ENCODE measurements at regions of chr3 and their contacts with region 1.

Region 1: DNA sequence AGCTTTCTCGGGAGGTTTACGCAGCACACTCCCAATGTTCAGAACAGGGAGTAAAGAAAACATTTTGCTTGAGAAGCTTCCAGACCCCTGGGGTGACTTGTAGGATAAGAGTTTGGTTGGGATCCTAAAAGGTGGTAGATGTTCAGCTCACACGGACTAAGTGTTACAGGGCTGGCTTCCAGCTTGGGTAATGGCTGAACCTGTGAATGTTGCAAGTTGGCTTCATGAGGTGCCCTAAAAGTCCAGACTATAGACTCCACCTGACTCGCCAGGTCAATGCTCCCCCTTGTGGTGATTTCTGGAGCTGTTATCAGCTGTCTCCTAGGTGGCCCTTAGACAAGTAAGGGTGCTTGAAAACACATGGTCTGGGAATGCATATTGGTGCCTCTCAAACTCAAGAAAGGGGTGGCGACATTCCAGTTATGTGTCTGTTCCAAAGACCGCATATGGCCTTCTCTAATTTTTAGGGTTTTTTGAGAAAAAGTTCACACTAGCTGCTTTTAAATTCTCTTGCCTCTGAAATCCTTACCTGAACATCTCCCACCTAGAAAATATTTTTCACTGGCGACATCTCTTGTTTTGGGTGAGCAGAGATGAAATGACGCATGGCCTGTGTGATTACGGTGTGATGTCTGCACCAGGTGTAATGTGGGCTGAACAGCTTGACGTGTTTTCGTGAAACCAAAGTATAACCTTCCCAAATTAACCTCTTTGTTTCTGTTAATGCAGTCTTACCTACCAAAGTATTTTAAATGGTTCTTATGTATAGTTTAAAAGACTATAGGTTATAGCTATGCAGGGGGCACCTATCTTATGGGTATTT is 175.7 kb upstream of the KBTBD8 start:
- ATAC-seq: peak in 4 of 8 experiments; percentile 18 to 93 (median 74)
- H3K4me3 ChIP-seq: no peak overlapping the region
- H3K27ac ChIP-seq: no peak overlapping the region
- H3K4me1 ChIP-seq: peaks cover 16 to 26% of the 10 kb centered on the region in 2 donors

Region 2: DNA sequence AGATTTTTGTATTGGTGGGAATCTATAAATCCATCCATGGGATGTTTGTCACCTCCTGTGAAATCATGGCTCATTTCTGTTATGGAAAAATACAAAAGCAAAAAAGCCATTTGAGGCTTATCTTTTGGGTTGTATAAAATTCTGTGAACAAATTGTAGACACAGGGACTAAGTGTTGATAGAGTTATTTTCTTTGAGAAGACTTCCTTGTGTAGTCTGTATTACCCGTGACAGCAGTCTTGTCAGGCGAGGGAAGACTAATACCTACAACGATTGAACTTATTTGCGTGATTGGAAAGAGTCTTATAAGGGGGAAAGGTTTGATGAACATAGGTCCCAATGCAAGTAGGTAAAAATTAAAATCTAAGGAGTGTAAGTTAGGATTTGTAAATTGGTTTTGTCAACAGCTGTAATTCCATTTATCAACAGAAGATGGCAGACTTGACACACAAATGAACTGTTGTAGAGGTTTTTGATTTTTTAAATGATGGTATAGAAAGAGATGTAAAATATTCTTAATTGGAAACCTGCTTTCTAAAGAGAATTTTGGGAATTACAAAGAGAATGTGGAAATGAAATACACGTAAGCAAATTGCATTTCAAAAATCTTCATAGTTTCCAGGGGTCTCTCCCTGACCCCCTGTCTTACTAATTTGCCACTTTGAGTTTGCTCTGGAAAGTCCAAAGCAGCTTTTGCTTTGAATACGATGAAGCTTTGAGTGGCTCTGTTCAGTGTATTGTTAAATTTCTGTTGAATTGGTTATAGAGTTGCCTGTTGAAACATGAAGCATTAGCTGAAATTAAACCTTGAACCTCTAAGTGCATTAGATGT is 568.4 kb before region 1 on chr3:
- in situ Hi-C with region 1: loop called in 2 of 9 experiments (anchors 10 to 25 kb)
- ATAC-seq: peak in 3 of 8 experiments; percentile 31 to 40 (median 31)
- H3K4me3 ChIP-seq: no peak overlapping the region
- H3K27ac ChIP-seq: no peak overlapping the region
- H3K4me1 ChIP-seq: no peaks in the 10 kb centered on the region

Region 3: GRCh38 chr3:66276705-66277274 is 545.6 kb before region 1 on chr3:
- in situ Hi-C with region 1: loop called in 8 of 9 experiments (anchors 5 to 25 kb)
- ATAC-seq: peak in 4 of 8 experiments; percentile 43 to 74 (median 62)
- H3K4me3 ChIP-seq: no peak overlapping the region
- H3K27ac ChIP-seq: no peak overlapping the region
- H3K4me1 ChIP-seq: no peaks in the 10 kb centered on the region

Region 4: DNA sequence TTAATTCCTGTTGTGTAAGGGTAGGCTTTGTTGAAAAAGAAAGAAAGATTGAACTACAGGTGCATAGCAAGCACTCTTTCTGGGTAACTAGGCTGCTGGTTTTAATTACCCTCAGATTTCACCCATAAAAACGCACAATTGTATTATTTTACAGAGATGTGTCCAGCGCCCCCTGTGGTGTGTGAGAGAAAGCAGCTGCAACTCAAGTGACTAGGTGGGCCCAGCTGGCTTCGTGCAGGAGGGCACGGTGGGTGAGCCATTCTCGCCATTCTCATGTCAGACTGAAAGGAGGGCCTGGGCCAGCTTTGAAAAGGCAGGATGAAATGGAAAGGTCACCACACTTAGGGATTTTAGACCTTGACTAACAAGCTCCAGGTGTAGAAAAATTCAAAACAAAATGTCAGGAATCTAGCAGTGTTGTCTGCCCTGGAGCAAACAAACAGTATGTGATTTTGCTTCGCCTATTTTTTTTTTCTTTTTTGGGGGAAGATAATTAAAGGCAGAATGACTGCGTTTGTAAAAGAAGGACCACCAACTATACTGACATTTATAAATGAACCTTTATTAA is 444.1 kb before region 1 on chr3:
- in situ Hi-C with region 1: loop called in 1 of 9 experiments (anchors 25 kb)
- ATAC-seq: peak in 4 of 8 experiments; percentile 16 to 44 (median 36)
- H3K4me3 ChIP-seq: no peak overlapping the region
- H3K27ac ChIP-seq: no peak overlapping the region
- H3K4me1 ChIP-seq: no peaks in the 10 kb centered on the region

Region 5: DNA sequence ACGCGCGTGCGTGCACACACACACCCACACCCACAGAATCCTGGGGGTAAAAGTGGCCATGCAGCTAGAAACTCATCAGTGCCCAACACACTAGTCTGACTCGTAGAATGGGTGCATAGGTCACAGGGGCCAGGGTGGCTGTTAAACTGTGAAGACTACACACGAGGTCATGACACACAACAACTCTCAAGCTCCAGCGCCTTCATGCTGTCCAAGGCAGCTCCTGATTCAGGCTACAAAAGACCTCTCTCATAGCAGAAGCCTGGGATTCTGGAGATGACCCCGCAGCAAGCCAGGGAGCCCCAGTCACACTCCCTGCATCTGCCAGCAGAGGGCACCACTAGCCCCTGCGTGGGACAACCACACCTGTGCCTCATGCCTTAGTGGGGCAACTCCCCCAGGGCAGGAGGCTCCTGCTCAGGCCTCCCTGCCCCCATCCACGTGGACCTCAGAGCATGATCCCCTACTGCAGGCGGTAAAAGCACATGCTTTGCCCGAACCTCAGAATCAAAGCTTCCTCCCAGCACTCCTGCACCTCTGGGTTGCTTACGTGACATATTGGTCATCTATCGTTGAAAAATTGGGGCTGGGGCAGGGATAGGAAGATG is 414.7 kb before region 1 on chr3:
- in situ Hi-C with region 1: loop called in 7 of 9 experiments (anchors 10 to 25 kb)
- ATAC-seq: peak; percentile 1 to 86 (median 72)
- H3K4me3 ChIP-seq: no peak overlapping the region
- H3K27ac ChIP-seq: no peak overlapping the region
- H3K4me1 ChIP-seq: peaks cover 0 to 3% of the 10 kb centered on the region in 2 donors

Region 6: GRCh38 chr3:66500576-66501482 is 321.6 kb before region 1 on chr3 and contains the start of gene LRIG1:
- in situ Hi-C with region 1: loop called in 2 of 9 experiments (anchors 25 kb)
- ATAC-seq: peak; percentile 89 to 97 (median 96)
- H3K4me3 ChIP-seq: peak within 1 kb of the TSS; percentile 51 to 84 (median 69)
- H3K27ac ChIP-seq: peak within 1 kb of the TSS; percentile 81 to 87
- H3K4me1 ChIP-seq: peaks cover 19 to 22% of the 10 kb centered on the region in 2 donors
- total RNA-seq, gene LRIG1: 15.0 to 135 (median 39.6) TPM

Region 7: DNA sequence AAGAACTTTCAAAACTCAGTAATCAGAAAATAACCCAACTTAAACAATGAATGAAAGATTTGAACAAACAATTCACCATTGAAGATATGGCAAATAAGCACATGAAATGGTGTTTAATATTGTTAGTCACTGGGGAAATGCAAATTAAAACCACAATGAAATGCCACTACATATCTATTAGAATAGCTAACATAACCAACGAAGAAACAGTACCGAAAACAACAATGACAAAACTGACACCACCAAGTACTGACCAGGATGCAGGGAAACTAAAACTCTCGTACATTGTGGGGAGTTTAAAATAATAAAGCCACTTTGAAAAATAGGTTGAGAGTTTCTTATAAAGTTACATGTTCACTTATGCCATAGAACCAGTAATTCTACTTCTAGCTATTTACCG is 244.9 kb after region 1 on chr3:
- in situ Hi-C with region 1: no loop called
- ATAC-seq: no peak
- H3K4me3 ChIP-seq: no peak overlapping the region
- H3K27ac ChIP-seq: no peak overlapping the region
- H3K4me1 ChIP-seq: no peaks in the 10 kb centered on the region

Region 8: GRCh38 chr3:67495751-67496150 is 673.4 kb after region 1 on chr3:
- in situ Hi-C with region 1: no loop called
- ATAC-seq: peak in 1 of 8 experiments; percentile 25
- H3K4me3 ChIP-seq: no peak overlapping the region
- H3K27ac ChIP-seq: no peak overlapping the region
- H3K4me1 ChIP-seq: peaks cover 3 to 17% of the 10 kb centered on the region in 2 donors

Measured in motor neuron (in vitro differentiated cells).